ENCODE measurements at regions of chr13 and their contacts with region 1.

Region 1: DNA sequence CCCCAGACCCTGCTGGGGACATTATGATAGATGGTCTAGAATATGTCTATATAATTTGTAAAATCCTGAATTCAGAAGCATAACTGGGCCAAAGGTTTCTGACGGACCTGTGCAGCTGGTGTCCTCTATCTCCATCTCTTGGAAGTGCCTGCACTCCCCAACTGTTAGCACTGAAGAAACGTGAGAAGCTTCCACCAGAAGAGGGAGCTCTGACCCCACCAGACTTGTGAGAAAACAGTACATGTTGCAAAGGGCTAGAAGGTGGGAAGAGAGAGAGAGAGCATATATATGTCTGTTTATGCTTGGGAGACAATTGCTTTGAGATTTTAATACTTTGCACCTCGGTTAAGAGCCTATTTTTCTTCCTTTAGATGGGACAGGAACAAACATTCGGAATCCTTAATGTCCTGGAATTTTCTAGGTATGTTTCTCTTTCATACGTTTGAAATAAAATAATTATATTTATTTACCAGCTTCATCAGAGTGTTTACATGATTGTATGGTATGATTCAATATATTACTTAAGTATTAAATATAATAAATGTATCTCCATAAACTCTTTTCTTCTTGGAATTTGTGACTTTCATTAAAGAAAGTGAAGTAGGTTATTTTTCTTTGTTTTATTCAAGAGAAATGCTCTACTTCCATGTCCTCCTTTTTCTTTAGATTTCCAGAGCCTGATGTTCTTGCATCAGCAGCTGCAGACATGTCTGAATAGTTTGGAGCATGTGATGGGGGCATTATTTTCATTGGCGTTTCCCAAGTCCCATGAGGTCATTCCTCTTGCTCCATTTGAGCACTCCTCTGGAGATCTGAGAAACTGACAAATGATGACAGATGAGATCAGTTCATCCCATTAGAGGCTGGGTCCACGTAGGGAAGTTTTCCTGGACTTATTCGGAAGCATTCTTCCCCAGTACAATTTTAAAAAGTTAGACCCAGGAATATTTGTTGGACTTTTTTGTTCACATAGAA is 202.9 kb downstream of the ATP8A2 start:
- DNase-seq: peak; percentile 30
- ATAC-seq: peak; percentile 93
- H3K4me3 ChIP-seq: no peak overlapping the region
- H3K27ac ChIP-seq: no peak overlapping the region
- H3K4me1 ChIP-seq: no peaks in the 10 kb centered on the region
- H3K27me3 ChIP-seq: peaks cover 0 to 4% of the 10 kb centered on the region in 2 experiments; a peak in 1 of 4 replicates
- CTCF ChIP-seq: peak; percentile 86 to 90 (median 87)
- EP300 ChIP-seq: no peak
- POLR2A ChIP-seq: no peak
- RAD21 ChIP-seq: peak; percentile 96

Region 2: GRCh38 chr13:25478186-25478585 is 96.5 kb before region 1 on chr13:
- CTCF ChIA-PET with region 1: no interaction called
- POLR2A ChIA-PET with region 1: no interaction called
- RAD21 ChIA-PET with region 1: no interaction called
- SMC1A ChIA-PET with region 1: no interaction called
- in situ Hi-C with region 1: no loop called
- intact Hi-C with region 1: no loop called
- DNase-seq: no peak
- ATAC-seq: no peak
- H3K4me3 ChIP-seq: no peak overlapping the region
- H3K27ac ChIP-seq: no peak overlapping the region
- H3K4me1 ChIP-seq: no peaks in the 10 kb centered on the region
- H3K27me3 ChIP-seq: no peaks in the 10 kb centered on the region; a peak in 2 of 4 replicates
- CTCF ChIP-seq: no peak
- EP300 ChIP-seq: no peak
- POLR2A ChIP-seq: no peak
- RAD21 ChIP-seq: no peak

Region 3: DNA sequence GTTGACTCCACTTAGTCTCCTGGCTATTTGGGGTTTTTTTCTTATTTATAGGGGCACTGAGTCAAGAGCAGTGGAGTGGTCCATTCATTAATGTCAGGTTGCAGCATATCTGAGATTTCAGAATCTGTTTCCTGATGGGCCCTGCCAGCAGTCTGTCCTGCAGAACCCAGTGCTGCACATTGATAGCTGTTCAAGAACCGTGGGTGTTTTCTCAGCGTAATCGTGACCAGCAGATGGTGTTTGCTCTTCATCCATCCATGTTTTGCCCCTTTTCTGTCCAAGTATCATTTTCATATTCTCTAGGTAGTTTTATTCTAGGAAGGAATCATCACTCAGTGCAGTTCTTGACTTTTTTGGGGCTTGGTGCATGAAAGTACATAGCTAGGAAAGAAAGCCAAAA is 36.4 kb before region 1 on chr13:
- CTCF ChIA-PET with region 1: no interaction called
- POLR2A ChIA-PET with region 1: no interaction called
- RAD21 ChIA-PET with region 1: no interaction called
- SMC1A ChIA-PET with region 1: no interaction called
- in situ Hi-C with region 1: no loop called
- intact Hi-C with region 1: no loop called
- DNase-seq: no peak
- ATAC-seq: no peak
- H3K4me3 ChIP-seq: no peak overlapping the region
- H3K27ac ChIP-seq: no peak overlapping the region
- H3K4me1 ChIP-seq: no peaks in the 10 kb centered on the region
- H3K27me3 ChIP-seq: peaks cover 0 to 4% of the 10 kb centered on the region in 2 experiments; a peak in 2 of 4 replicates
- CTCF ChIP-seq: no peak
- EP300 ChIP-seq: no peak
- POLR2A ChIP-seq: no peak
- RAD21 ChIP-seq: no peak

Region 4: DNA sequence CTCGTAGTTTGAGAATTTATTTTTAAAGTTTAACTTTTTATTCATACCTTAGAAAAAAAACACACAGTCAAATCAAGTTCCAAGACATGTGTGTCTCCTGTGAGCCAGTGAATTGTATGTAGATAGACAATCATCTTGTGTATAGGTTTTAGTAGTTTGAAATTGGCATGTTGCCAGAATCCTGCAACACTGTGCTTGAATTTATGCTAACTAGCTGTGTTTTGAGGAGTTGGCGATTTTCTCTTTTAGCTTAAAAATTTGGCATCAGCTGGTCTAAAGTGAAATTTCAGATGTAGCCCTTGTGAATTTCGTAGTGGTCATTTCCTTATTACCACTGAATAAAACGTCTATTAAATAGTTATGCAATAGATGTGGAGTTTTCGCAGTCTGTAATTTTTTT is 10.3 kb after region 1 on chr13:
- CTCF ChIA-PET with region 1: interaction called, 21 read pairs
- POLR2A ChIA-PET with region 1: no interaction called
- RAD21 ChIA-PET with region 1: interaction called, 4 read pairs
- SMC1A ChIA-PET with region 1: interaction called, 3 read pairs
- in situ Hi-C with region 1: no loop called
- intact Hi-C with region 1: no loop called
- DNase-seq: no peak
- ATAC-seq: no peak
- H3K4me3 ChIP-seq: no peak overlapping the region
- H3K27ac ChIP-seq: no peak overlapping the region
- H3K4me1 ChIP-seq: no peaks in the 10 kb centered on the region
- H3K27me3 ChIP-seq: no peaks in the 10 kb centered on the region; a peak in 1 of 4 replicates
- CTCF ChIP-seq: no peak
- EP300 ChIP-seq: no peak
- POLR2A ChIP-seq: no peak
- RAD21 ChIP-seq: no peak

Region 5: DNA sequence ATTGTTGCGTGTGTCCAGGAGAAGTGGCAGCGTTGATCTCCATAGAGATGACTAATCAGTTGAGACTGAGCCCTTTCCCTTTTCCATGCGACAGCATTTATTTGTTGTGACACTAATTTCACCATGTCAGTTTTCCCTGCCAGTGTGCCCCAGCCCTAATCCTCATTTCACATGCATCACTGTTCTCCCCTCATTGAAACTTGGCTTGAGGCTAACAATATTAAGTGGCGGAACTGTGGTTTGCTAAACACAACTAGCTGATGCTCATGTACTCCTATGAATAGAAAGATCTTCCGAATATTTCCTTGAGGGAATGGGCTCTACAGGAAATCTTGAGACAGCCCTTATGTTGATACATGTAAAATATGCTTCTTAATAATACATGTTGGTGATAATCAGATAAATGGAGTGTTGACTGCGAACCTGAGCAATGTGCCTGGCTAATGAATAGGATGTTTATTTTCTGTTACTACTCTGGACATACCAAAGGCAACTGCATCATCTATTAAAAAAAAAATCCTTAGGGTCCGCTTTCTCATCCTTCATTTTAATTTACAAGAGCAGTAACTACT is 55.7 kb after region 1 on chr13:
- CTCF ChIA-PET with region 1: no interaction called
- POLR2A ChIA-PET with region 1: no interaction called
- RAD21 ChIA-PET with region 1: no interaction called
- SMC1A ChIA-PET with region 1: no interaction called
- in situ Hi-C with region 1: no loop called
- intact Hi-C with region 1: no loop called
- DNase-seq: no peak
- ATAC-seq: no peak
- H3K4me3 ChIP-seq: no peak overlapping the region
- H3K27ac ChIP-seq: no peak overlapping the region
- H3K4me1 ChIP-seq: no peaks in the 10 kb centered on the region
- H3K27me3 ChIP-seq: no peaks in the 10 kb centered on the region
- CTCF ChIP-seq: no peak
- EP300 ChIP-seq: no peak
- POLR2A ChIP-seq: no peak
- RAD21 ChIP-seq: no peak

Region 6: GRCh38 chr13:25943658-25944057 is 368.9 kb after region 1 on chr13:
- CTCF ChIA-PET with region 1: no interaction called
- POLR2A ChIA-PET with region 1: no interaction called
- RAD21 ChIA-PET with region 1: no interaction called
- SMC1A ChIA-PET with region 1: no interaction called
- in situ Hi-C with region 1: no loop called
- intact Hi-C with region 1: no loop called
- DNase-seq: no peak
- ATAC-seq: no peak
- H3K4me3 ChIP-seq: no peak overlapping the region
- H3K27ac ChIP-seq: no peak overlapping the region
- H3K4me1 ChIP-seq: no peaks in the 10 kb centered on the region
- H3K27me3 ChIP-seq: no peaks in the 10 kb centered on the region; a peak in 1 of 4 replicates
- CTCF ChIP-seq: no peak
- EP300 ChIP-seq: no peak
- POLR2A ChIP-seq: no peak
- RAD21 ChIP-seq: no peak

Region 7: DNA sequence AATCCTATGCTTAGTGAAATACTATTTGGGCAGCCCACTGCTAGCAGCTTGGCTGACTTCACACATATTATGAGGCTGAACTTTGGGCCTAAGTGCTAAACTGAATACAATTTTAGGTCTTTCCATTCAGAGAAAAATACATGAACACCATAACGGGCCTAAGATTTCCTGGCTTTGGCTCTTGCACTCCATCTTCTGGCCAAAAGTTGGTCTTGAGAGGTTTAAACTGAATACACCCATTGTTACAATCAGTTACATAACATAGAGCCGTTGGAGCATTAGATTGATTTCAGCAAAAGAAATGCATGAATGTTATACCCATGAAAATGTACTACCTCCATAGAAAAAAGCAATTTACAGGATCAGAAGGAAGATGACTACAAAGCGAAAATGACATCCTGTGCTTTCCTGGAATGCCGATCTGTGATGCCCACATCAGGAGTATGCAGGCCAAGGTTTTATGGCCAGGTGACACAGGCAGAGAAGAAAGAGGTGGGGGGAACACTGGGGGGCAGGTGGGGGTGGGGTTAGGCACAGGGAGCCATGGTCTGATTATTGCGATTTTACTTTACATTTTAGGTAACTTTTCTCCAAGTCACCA is 488.2 kb after region 1 on chr13:
- CTCF ChIA-PET with region 1: interaction called, 4 read pairs
- POLR2A ChIA-PET with region 1: no interaction called
- RAD21 ChIA-PET with region 1: interaction called, 3 read pairs
- SMC1A ChIA-PET with region 1: interaction called, 3 read pairs
- in situ Hi-C with region 1: loop called (anchors 5 kb)
- intact Hi-C with region 1: loop called (anchors 2 kb)
- DNase-seq: no peak
- ATAC-seq: peak; percentile 64
- H3K4me3 ChIP-seq: no peak overlapping the region
- H3K27ac ChIP-seq: no peak overlapping the region
- H3K4me1 ChIP-seq: no peaks in the 10 kb centered on the region
- H3K27me3 ChIP-seq: peaks cover 0 to 4% of the 10 kb centered on the region in 2 experiments; a peak in 1 of 4 replicates
- CTCF ChIP-seq: peak; percentile 42 to 59 (median 51); a peak in 5 of 6 replicates
- EP300 ChIP-seq: no peak
- POLR2A ChIP-seq: no peak
- RAD21 ChIP-seq: peak; percentile 70

Region 8: GRCh38 chr13:26071691-26072090 is 497.0 kb after region 1 on chr13:
- CTCF ChIA-PET with region 1: interaction called, 17 read pairs
- POLR2A ChIA-PET with region 1: no interaction called
- RAD21 ChIA-PET with region 1: interaction called, 5 read pairs
- SMC1A ChIA-PET with region 1: interaction called, 4 read pairs
- in situ Hi-C with region 1: no loop called
- intact Hi-C with region 1: no loop called
- DNase-seq: no peak
- ATAC-seq: no peak
- H3K4me3 ChIP-seq: no peak overlapping the region
- H3K27ac ChIP-seq: no peak overlapping the region
- H3K4me1 ChIP-seq: no peaks in the 10 kb centered on the region
- H3K27me3 ChIP-seq: 0 out of 4 replicates have a peak, but pooled peaks cover 0 to 2% of the 10 kb centered on the region in 2 experiments
- CTCF ChIP-seq: no peak
- EP300 ChIP-seq: no peak
- POLR2A ChIP-seq: no peak
- RAD21 ChIP-seq: no peak

Region 9: GRCh38 chr13:26698392-26699196 is 1123.9 kb after region 1 on chr13:
- CTCF ChIA-PET with region 1: interaction called, 5 read pairs
- POLR2A ChIA-PET with region 1: no interaction called
- RAD21 ChIA-PET with region 1: no interaction called
- SMC1A ChIA-PET with region 1: interaction called, 3 read pairs
- in situ Hi-C with region 1: no loop called
- intact Hi-C with region 1: loop called (anchors 5 kb)
- DNase-seq: peak; percentile 20
- ATAC-seq: peak; percentile 88
- H3K4me3 ChIP-seq: no peak overlapping the region
- H3K27ac ChIP-seq: no peak overlapping the region
- H3K4me1 ChIP-seq: no peaks in the 10 kb centered on the region
- H3K27me3 ChIP-seq: no peaks in the 10 kb centered on the region
- CTCF ChIP-seq: peak; percentile 89 to 96 (median 91)
- EP300 ChIP-seq: no peak
- POLR2A ChIP-seq: no peak
- RAD21 ChIP-seq: peak; percentile 91